SK-N-SH (cell line): ENCODE measurements at regions of chr4 and their contacts with region 1.

Region 1: DNA sequence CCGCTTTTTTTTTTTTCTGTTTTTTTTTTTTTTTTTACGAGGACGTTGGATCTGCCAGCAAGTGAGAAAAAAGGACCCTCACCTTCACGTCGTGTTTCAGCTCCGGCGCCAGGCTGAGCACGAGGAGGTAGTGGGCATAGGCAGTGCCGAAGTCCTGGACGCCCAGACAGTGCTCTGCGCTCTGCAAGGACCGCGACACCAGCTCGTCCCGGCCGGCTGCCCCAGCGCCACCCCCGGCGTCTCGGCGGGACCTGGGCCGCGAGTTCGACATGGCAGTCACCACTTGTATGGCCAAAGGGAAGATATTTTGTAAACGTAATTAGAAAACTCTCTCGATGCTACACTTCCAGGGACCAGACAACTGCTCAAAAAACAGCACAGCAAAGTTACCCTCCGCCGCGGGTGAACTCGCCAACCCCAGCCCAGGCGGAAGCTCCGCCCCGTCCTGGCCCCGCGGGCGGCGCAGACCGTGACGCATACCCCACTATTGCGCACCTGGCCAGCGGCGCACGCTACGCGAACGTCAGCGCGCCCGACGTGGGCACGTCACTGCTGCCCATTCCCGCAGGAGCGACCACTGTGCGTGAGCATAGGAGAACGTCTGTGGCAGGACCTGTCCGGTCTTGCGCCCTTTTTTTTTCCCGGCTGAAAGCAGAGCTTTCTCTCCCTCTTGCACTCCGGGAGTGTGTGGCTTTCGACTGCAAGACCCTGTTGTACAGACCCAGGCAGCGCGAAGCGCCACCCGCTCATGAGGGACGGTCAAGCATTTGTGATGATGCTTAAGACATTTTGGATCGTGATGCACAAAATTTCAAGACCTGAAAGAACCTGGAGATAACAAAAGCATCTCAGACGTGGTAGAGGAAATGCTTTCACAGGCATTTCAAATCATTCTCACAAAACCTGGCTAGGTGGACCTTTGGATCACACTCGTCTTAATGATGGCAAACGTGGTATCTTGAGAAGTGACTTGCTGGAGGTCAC is at the start of gene PRMT9:
- DNase-seq: peak; percentile 97
- H3K4me3 ChIP-seq: peak within 1 kb of the TSS; percentile 79 to 95
- H3K27ac ChIP-seq: peak within 1 kb of the TSS; percentile 79 to 95
- H3K4me1 ChIP-seq: peaks cover 0 to 5% of the 10 kb centered on the region in 2 experiments; a peak in 2 of 4 replicates
- H3K27me3 ChIP-seq: no peaks in the 10 kb centered on the region
- CTCF ChIP-seq: no peak
- EP300 ChIP-seq: no peak
- RAD21 ChIP-seq: peak; percentile 1; the same call in 1 of the 2 replicates
- polyA plus RNA-seq, gene PRMT9: 3.9 and 5.1 TPM in 2 replicates

Region 2: DNA sequence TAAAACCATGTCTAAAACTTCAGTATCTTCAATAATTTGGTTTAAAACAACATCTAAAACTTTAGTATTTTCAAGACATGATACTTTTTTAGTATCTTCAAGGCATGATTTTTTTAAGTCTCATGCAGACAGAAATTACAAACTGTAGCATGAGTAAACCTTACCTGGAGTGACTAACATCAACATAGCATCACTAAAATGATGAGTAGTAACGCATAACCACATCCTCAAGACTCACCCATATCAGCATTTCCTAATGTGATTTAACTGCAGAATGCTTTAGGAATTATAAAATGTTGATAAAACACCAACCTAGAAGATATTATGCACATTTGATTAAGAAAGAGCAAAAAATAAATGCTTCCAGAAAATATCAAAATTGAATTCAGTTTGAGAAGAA is 222.8 kb before region 1 on chr4:
- CTCF ChIA-PET with region 1: no interaction called
- POLR2A ChIA-PET with region 1: no interaction called
- DNase-seq: no peak
- H3K4me3 ChIP-seq: no peak overlapping the region
- H3K27ac ChIP-seq: no peak overlapping the region
- H3K4me1 ChIP-seq: no peaks in the 10 kb centered on the region
- H3K27me3 ChIP-seq: no peaks in the 10 kb centered on the region
- CTCF ChIP-seq: no peak
- EP300 ChIP-seq: no peak
- RAD21 ChIP-seq: no peak

Region 3: GRCh38 chr4:147617173-147617840 is 66.7 kb before region 1 on chr4 and contains the start of gene TMEM184C:
- CTCF ChIA-PET with region 1: no interaction called
- POLR2A ChIA-PET with region 1: interaction called, 13 read pairs
- DNase-seq: peak; percentile 89
- H3K4me3 ChIP-seq: peak within 1 kb of the TSS; percentile 79 to 98
- H3K27ac ChIP-seq: peak within 1 kb of the TSS; percentile 64 to 86; a peak in 3 of 4 replicates
- H3K4me1 ChIP-seq: peaks cover 0 to 20% of the 10 kb centered on the region in 2 experiments; a peak in 3 of 4 replicates
- H3K27me3 ChIP-seq: no peaks in the 10 kb centered on the region
- CTCF ChIP-seq: peak; percentile 25
- EP300 ChIP-seq: peak in 1 of 2 experiments; percentile 5; a peak in 1 of 4 replicates
- RAD21 ChIP-seq: no peak
- polyA plus RNA-seq, gene TMEM184C: 17.5 and 22.8 TPM in 2 replicates

Region 4: DNA sequence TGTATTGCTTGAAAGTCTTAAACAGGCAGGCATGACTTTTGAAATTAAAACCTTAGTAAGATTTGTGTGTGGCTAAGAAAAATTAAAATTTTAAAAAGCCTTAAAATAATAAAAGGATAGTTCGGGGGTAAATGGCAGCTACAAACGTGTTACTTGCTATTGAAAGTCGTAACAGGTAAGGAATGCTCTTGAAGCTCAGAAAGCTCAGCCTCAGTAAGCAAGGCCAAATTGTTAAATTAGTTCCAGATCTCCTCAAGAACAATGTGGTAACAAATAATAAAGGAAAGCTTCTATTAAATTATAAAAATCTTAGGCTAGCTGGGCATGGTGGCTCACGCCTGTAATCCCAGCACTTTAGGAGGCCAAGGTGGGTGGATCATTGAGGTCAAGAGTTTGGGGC is 25.5 kb before region 1 on chr4:
- CTCF ChIA-PET with region 1: no interaction called
- POLR2A ChIA-PET with region 1: no interaction called
- DNase-seq: no peak
- H3K4me3 ChIP-seq: no peak overlapping the region
- H3K27ac ChIP-seq: no peak overlapping the region
- H3K4me1 ChIP-seq: no peaks in the 10 kb centered on the region
- H3K27me3 ChIP-seq: no peaks in the 10 kb centered on the region
- CTCF ChIP-seq: no peak
- EP300 ChIP-seq: no peak
- RAD21 ChIP-seq: no peak